ENCODE measurements at regions of chr12 and their contacts with region 1.

Region 1: GRCh38 chr12:47848853-47849252 is 29.1 kb upstream of the HDAC7 start:
- DNase-seq: no peak
- ATAC-seq: no peak
- H3K4me3 ChIP-seq: no peak overlapping the region
- H3K27ac ChIP-seq: no peak overlapping the region
- H3K4me1 ChIP-seq: no peaks in the 10 kb centered on the region
- H3K27me3 ChIP-seq: no peaks in the 10 kb centered on the region
- CTCF ChIP-seq: no peak

Region 2: DNA sequence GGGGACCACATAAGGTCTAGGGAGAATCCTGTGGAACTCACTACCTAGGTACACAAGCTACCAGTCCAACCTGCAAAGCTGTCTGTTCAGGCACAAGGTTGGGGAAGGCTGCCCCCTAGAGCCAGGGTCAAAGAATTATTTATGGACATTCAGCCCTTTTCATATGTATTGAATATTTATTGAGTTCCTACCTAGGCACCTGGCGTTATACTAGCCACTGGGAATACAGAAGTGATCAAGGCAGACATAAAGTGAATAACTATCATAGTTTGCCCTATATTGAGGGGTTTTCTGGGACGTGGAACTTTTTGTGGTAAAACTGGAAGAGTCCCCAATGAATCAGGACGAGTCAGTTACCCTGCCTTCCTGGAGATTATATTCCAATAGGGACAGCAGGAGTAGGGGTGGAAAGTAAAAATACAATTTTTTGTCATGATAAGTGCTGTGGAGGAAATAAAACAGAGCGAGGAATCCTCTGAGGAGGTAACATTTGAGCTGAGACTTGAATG is 81.6 kb before region 1 on chr12:
- CTCF ChIA-PET with region 1: interaction called, 14 read pairs
- POLR2A ChIA-PET with region 1: no interaction called
- in situ Hi-C with region 1: no loop called
- intact Hi-C with region 1: no loop called
- DNase-seq: no peak
- ATAC-seq: peak; percentile 49; the same call in 1 of the 2 replicates
- H3K4me3 ChIP-seq: no peak overlapping the region
- H3K27ac ChIP-seq: peak overlapping the region; percentile 31; the same call in 1 of the 2 replicates
- H3K4me1 ChIP-seq: peaks cover 26% of the 10 kb centered on the region
- H3K27me3 ChIP-seq: no peaks in the 10 kb centered on the region
- CTCF ChIP-seq: peak; percentile 85

Region 3: GRCh38 chr12:48567731-48568130 is 718.9 kb after region 1 on chr12:
- CTCF ChIA-PET with region 1: no interaction called
- POLR2A ChIA-PET with region 1: no interaction called
- in situ Hi-C with region 1: no loop called
- intact Hi-C with region 1: no loop called
- DNase-seq: no peak
- ATAC-seq: no peak
- H3K4me3 ChIP-seq: no peak overlapping the region
- H3K27ac ChIP-seq: no peak overlapping the region
- H3K4me1 ChIP-seq: no peaks in the 10 kb centered on the region
- H3K27me3 ChIP-seq: peaks cover 9% of the 10 kb centered on the region; the same call in 1 of the 2 replicates
- CTCF ChIP-seq: no peak